CD4-positive, alpha-beta memory T cell (primary cell): ENCODE measurements at regions of chr3 and their contacts with region 1.

Region 1: DNA sequence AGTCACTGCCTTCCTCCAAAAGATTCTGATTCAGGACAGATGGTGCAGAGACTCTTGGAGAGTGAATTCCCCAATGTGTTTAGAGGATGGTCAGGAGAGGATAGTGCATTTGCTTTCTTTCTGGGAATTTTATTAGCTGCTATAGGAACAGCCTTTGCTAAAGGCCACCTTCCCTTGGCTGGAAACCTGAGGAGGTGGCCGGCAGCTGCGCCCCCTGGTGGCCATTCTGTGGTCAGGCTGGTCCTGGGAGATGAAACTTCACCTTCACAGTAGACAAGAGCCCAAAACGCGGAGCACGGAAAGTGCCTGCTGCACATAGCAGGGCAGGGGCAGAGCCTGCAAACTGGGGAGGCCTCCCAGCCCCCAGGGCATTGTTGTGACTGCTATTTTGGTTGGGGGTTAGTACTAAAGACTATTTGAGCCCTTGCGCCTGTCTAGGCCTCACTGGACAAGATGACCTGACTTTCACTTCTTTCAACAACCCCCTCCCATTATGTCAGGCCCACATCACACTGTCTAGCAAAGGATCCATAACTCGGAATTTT is 34.3 kb downstream of the SEC22C start:
- DNase-seq: peak; percentile 57 to 68 (median 59)
- H3K4me3 ChIP-seq: no peak overlapping the region
- H3K4me3 Mint-ChIP-seq: no peak overlapping the region
- H3K27ac ChIP-seq: no peak overlapping the region
- H3K27ac Mint-ChIP-seq: peak overlapping the region in 4 of 7 donors; percentile 13 to 70 (median 44)
- H3K4me1 ChIP-seq: no peaks in the 10 kb centered on the region
- H3K4me1 Mint-ChIP-seq: peaks cover 4 to 26% (median 12%) of the 10 kb centered on the region in 4 donors
- H3K27me3 ChIP-seq: no peaks in the 10 kb centered on the region
- H3K27me3 Mint-ChIP-seq: no peaks in the 10 kb centered on the region

Region 2: DNA sequence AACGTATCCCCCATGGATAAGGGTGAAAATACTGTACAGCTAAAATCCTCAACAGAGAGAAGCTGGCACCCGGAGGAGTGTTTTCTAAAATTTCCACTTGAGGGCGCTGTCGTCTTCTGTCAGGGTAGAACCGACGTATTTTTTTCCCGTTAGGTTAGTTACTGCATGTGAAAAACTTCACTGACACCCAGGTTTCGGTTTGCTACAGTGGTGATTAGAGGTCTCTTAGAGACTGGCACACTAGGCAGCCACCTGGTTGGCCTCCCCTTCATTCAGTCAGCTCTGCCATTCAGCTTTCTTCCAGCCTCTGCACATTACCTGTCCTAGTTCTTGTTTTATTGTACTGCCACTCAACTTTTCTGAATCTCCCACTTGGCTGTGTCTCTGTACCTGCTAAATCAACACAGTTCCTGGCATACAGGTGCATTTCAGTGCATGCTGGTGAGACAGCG is 299.9 kb before region 1 on chr3:
- CTCF ChIA-PET with region 1: interaction called, 14 read pairs
- POLR2A ChIA-PET with region 1: no interaction called
- intact Hi-C with region 1: no loop called
- DNase-seq: peak; percentile 55 to 64 (median 59)
- H3K4me3 ChIP-seq: no peak overlapping the region
- H3K4me3 Mint-ChIP-seq: peak overlapping the region in 3 of 8 donors; percentile 20 to 56 (median 45)
- H3K27ac ChIP-seq: no peak overlapping the region
- H3K27ac Mint-ChIP-seq: peak overlapping the region in 2 of 7 donors; percentile 14 to 26
- H3K4me1 ChIP-seq: peaks cover 3% of the 10 kb centered on the region
- H3K4me1 Mint-ChIP-seq: peaks cover 4 to 9% (median 7%) of the 10 kb centered on the region in 4 donors
- H3K27me3 ChIP-seq: no peaks in the 10 kb centered on the region
- H3K27me3 Mint-ChIP-seq: peaks cover 6 to 15% of the 10 kb centered on the region in 2 donors

Region 3: GRCh38 chr3:42351207-42351606 is 196.3 kb before region 1 on chr3:
- CTCF ChIA-PET with region 1: no interaction called
- POLR2A ChIA-PET with region 1: no interaction called
- intact Hi-C with region 1: no loop called
- DNase-seq: no peak
- H3K4me3 ChIP-seq: no peak overlapping the region
- H3K4me3 Mint-ChIP-seq: no peak overlapping the region
- H3K27ac ChIP-seq: no peak overlapping the region
- H3K27ac Mint-ChIP-seq: no peak overlapping the region
- H3K4me1 ChIP-seq: peaks cover 12% of the 10 kb centered on the region
- H3K4me1 Mint-ChIP-seq: peaks cover 0 to 5% (median 0%) of the 10 kb centered on the region in 4 donors
- H3K27me3 ChIP-seq: no peaks in the 10 kb centered on the region
- H3K27me3 Mint-ChIP-seq: peaks cover 2 to 4% of the 10 kb centered on the region in 2 donors

Region 4: DNA sequence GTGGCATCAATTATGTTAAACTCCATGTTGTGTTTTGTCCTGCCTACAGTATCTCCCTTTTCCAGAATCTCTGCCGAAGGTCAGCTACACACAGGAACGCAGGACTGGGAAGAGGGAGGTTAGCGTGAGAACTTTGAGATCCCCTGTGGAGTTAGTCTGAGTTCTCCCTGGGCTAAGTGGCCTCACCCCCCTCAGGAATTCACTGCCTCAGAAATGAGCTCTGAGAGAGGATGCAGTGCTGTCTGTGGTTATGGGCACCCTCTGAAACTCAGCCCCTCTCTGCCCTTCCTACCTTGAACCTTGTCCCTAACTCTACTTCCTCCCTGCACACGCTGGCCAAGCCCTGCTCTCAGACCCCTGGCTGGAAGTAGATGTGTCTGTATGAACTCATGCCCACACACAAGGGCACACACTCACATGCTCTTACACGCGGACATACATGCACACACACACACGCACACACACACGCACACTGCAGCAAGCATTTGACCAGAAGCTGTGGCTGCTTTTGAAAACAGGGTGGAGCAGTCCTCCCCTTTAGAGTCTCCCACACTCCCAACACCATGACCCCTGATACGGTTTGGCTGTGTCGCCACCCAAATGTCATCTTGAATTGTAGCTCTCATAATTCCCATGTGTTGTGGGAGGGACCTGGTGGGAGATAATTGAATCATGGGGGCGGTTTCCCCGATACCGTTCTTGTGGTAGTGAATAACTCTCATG is 50.3 kb before region 1 on chr3:
- CTCF ChIA-PET with region 1: interaction called, 1,823 read pairs
- POLR2A ChIA-PET with region 1: interaction called, 28 read pairs
- intact Hi-C with region 1: no loop called
- DNase-seq: no peak
- H3K4me3 ChIP-seq: no peak overlapping the region
- H3K4me3 Mint-ChIP-seq: no peak overlapping the region
- H3K27ac ChIP-seq: no peak overlapping the region
- H3K27ac Mint-ChIP-seq: peak overlapping the region in 1 of 7 donors; percentile 18
- H3K4me1 ChIP-seq: peaks cover 13% of the 10 kb centered on the region
- H3K4me1 Mint-ChIP-seq: peaks cover 3 to 17% (median 11%) of the 10 kb centered on the region in 4 donors
- H3K27me3 ChIP-seq: peaks cover 9% of the 10 kb centered on the region
- H3K27me3 Mint-ChIP-seq: peaks cover 6 to 12% of the 10 kb centered on the region in 2 donors